ENCODE measurements at regions of chr2 and their contacts with region 1.

Region 1: GRCh38 chr2:290090-290722 is 2.3 kb upstream of the ALKAL2 start:
- DNase-seq: peak; percentile 79 to 84
- H3K4me3 ChIP-seq: peak overlapping the region; percentile 41
- H3K4me3 Mint-ChIP-seq: peak overlapping the region; percentile 67
- H3K27ac Mint-ChIP-seq: no peak overlapping the region
- H3K4me1 ChIP-seq: peaks cover 4% of the 10 kb centered on the region; the same call in 1 of the 2 replicates
- H3K4me1 Mint-ChIP-seq: no peaks in the 10 kb centered on the region
- H3K27me3 ChIP-seq: no peaks in the 10 kb centered on the region; the same call in none of the 2 replicates
- H3K27me3 Mint-ChIP-seq: peaks cover 12% of the 10 kb centered on the region
- CTCF ChIP-seq: peak; percentile 85 to 96

Region 2: GRCh38 chr2:175880-176800 is 114.1 kb before region 1 on chr2:
- CTCF ChIA-PET with region 1: no interaction called
- POLR2A ChIA-PET with region 1: no interaction called
- intact Hi-C with region 1: loop called (anchors 1 kb)
- DNase-seq: no peak
- H3K4me3 ChIP-seq: no peak overlapping the region
- H3K4me3 Mint-ChIP-seq: no peak overlapping the region
- H3K27ac Mint-ChIP-seq: no peak overlapping the region
- H3K4me1 ChIP-seq: no peaks in the 10 kb centered on the region
- H3K4me1 Mint-ChIP-seq: no peaks in the 10 kb centered on the region
- H3K27me3 ChIP-seq: no peaks in the 10 kb centered on the region
- H3K27me3 Mint-ChIP-seq: peaks cover 3% of the 10 kb centered on the region
- CTCF ChIP-seq: no peak

Region 3: GRCh38 chr2:246489-247144 is 43.6 kb before region 1 on chr2:
- CTCF ChIA-PET with region 1: interaction called, 6 read pairs
- POLR2A ChIA-PET with region 1: no interaction called
- intact Hi-C with region 1: loop called (anchors 1 kb)
- DNase-seq: peak in 1 of 2 experiments; percentile 70
- H3K4me3 ChIP-seq: no peak overlapping the region
- H3K4me3 Mint-ChIP-seq: no peak overlapping the region
- H3K27ac Mint-ChIP-seq: no peak overlapping the region
- H3K4me1 ChIP-seq: no peaks in the 10 kb centered on the region
- H3K4me1 Mint-ChIP-seq: no peaks in the 10 kb centered on the region
- H3K27me3 ChIP-seq: no peaks in the 10 kb centered on the region
- H3K27me3 Mint-ChIP-seq: no peaks in the 10 kb centered on the region
- CTCF ChIP-seq: peak; percentile 61 to 69

Region 4: GRCh38 chr2:275466-275865 is 14.7 kb before region 1 on chr2:
- CTCF ChIA-PET with region 1: no interaction called
- POLR2A ChIA-PET with region 1: no interaction called
- intact Hi-C with region 1: no loop called
- DNase-seq: no peak
- H3K4me3 ChIP-seq: no peak overlapping the region
- H3K4me3 Mint-ChIP-seq: no peak overlapping the region
- H3K27ac Mint-ChIP-seq: no peak overlapping the region
- H3K4me1 ChIP-seq: no peaks in the 10 kb centered on the region
- H3K4me1 Mint-ChIP-seq: no peaks in the 10 kb centered on the region
- H3K27me3 ChIP-seq: no peaks in the 10 kb centered on the region
- H3K27me3 Mint-ChIP-seq: no peaks in the 10 kb centered on the region
- CTCF ChIP-seq: no peak

Region 5: GRCh38 chr2:348361-348916 is 58.2 kb after region 1 on chr2:
- CTCF ChIA-PET with region 1: no interaction called
- POLR2A ChIA-PET with region 1: no interaction called
- intact Hi-C with region 1: no loop called
- DNase-seq: no peak
- H3K4me3 ChIP-seq: no peak overlapping the region
- H3K4me3 Mint-ChIP-seq: no peak overlapping the region
- H3K27ac Mint-ChIP-seq: no peak overlapping the region
- H3K4me1 ChIP-seq: no peaks in the 10 kb centered on the region
- H3K4me1 Mint-ChIP-seq: no peaks in the 10 kb centered on the region
- H3K27me3 ChIP-seq: no peaks in the 10 kb centered on the region
- H3K27me3 Mint-ChIP-seq: peaks cover 14% of the 10 kb centered on the region
- CTCF ChIP-seq: no peak